Activated CD4-positive, alpha-beta T cell treated with anti-CD3 and anti-CD28 coated beads for 36 hours (primary cell): ENCODE measurements at regions of chr15 and their contacts with region 1.

Region 1: GRCh38 chr15:65610871-65611718 is at the start of gene INTS14:
- DNase-seq: peak; percentile 98
- ATAC-seq: peak; percentile 99
- H3K4me3 Mint-ChIP-seq: peak within 1 kb of the TSS; percentile 97
- H3K27ac Mint-ChIP-seq: peak within 1 kb of the TSS; percentile 96
- H3K4me1 Mint-ChIP-seq: peaks cover 33% of the 10 kb centered on the region
- H3K27me3 Mint-ChIP-seq: no peaks in the 10 kb centered on the region
- total RNA-seq, gene INTS14: 49.2 to 59.8 TPM

Region 2: DNA sequence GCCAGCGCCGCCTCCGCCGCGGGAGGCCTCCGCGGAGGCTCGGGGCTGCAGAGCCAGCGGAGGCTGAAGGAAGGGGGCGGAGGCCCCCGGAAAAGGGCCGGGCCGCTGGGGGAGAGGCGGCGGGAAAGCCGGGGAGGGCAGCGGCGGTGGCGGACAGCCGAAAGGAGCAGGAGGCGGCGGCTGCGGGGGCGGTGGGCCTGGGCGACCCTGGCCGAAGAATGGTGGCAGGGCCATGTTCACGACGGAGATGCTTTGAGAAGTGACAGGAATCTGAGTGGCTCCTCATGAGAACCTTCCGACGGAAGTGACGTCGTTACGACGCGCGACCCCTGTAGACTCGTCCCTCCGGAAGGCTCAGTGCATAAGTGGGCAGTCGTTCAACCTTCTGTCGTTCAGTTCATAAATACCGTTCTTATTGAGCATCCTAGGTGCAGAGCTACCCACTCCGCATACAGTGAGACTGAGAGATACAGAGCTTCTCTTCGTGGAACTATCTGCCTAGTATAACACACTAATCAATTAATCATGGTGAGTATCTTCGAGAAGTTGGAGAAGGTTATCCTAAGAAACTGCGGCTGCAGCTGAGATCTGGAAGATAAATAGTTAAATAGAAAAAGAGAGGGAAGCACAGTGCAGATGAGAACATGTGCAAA is 477.4 kb before region 1 on chr15 and contains the start of gene PDCD7:
- CTCF ChIA-PET with region 1: interaction called, 3 read pairs
- POLR2A ChIA-PET with region 1: no interaction called
- intact Hi-C with region 1: loop called in 1 of 2 experiments (anchors 1 kb)
- DNase-seq: peak; percentile 91
- ATAC-seq: peak; percentile 96
- H3K4me3 Mint-ChIP-seq: peak within 1 kb of the TSS; percentile 85
- H3K27ac Mint-ChIP-seq: peak within 1 kb of the TSS; percentile 93
- H3K4me1 Mint-ChIP-seq: peaks cover 26% of the 10 kb centered on the region
- H3K27me3 Mint-ChIP-seq: no peaks in the 10 kb centered on the region
- total RNA-seq, gene PDCD7: 16.6 to 24.8 TPM

Region 3: GRCh38 chr15:65426216-65426853 is 184.8 kb before region 1 on chr15:
- CTCF ChIA-PET with region 1: no interaction called
- POLR2A ChIA-PET with region 1: no interaction called
- intact Hi-C with region 1: no loop called
- DNase-seq: no peak
- ATAC-seq: no peak
- H3K4me3 Mint-ChIP-seq: no peak overlapping the region
- H3K27ac Mint-ChIP-seq: no peak overlapping the region
- H3K4me1 Mint-ChIP-seq: peaks cover 10% of the 10 kb centered on the region
- H3K27me3 Mint-ChIP-seq: peaks cover 38% of the 10 kb centered on the region

Region 4: DNA sequence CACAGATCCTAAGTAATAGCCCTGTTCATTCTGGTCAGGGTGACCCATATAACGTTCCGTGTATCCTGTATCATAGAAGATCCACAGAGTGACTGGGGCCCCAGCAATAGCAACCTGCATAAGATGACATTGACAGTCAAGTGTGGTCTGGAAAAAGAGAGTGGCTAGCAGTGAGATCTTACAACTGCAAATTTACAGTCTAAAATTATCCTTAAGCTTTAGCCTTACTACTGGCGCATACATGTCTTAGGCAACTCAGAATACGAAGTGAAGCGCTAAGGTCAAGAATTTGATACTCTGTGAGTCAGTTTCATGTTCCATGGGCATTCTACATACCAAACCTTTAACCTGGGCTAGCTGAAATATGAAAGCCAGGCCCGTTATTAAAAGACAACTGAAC is 159.1 kb before region 1 on chr15:
- CTCF ChIA-PET with region 1: no interaction called
- POLR2A ChIA-PET with region 1: no interaction called
- intact Hi-C with region 1: no loop called
- DNase-seq: no peak
- ATAC-seq: no peak
- H3K4me3 Mint-ChIP-seq: no peak overlapping the region
- H3K27ac Mint-ChIP-seq: no peak overlapping the region
- H3K4me1 Mint-ChIP-seq: no peaks in the 10 kb centered on the region
- H3K27me3 Mint-ChIP-seq: no peaks in the 10 kb centered on the region

Region 5: GRCh38 chr15:65516997-65517865 is 93.9 kb before region 1 on chr15 and contains the start of gene DPP8:
- CTCF ChIA-PET with region 1: no interaction called
- POLR2A ChIA-PET with region 1: interaction called, 3 read pairs
- intact Hi-C with region 1: loop called in 1 of 2 experiments (anchors 1 kb)
- DNase-seq: peak; percentile 97
- ATAC-seq: peak; percentile 97
- H3K4me3 Mint-ChIP-seq: peak within 1 kb of the TSS; percentile 91
- H3K27ac Mint-ChIP-seq: peak within 1 kb of the TSS; percentile 88
- H3K4me1 Mint-ChIP-seq: peaks cover 36% of the 10 kb centered on the region
- H3K27me3 Mint-ChIP-seq: no peaks in the 10 kb centered on the region
- total RNA-seq, gene DPP8: 25.8 to 26.4 TPM

Region 6: DNA sequence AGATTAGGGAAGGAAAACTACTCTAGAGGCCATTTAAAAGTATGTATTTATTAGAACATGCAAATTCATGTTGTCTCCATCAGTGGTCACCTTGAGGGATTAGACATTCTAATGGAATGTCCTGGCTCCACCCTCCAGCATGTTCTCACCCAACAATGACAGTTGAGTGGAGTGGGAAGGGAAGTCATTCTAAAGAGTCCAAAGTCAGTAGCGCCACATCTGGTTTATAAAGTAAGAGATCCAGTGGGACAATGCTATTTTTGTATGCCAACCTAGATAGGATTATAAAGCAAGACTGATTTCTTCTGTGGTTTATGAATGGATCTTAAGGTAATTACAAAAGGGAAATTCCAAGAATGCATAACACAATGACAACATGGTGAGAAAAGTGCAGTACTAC is 43.9 kb after region 1 on chr15:
- CTCF ChIA-PET with region 1: no interaction called
- POLR2A ChIA-PET with region 1: no interaction called
- intact Hi-C with region 1: no loop called
- DNase-seq: no peak
- ATAC-seq: no peak
- H3K4me3 Mint-ChIP-seq: no peak overlapping the region
- H3K27ac Mint-ChIP-seq: no peak overlapping the region
- H3K4me1 Mint-ChIP-seq: peaks cover 5% of the 10 kb centered on the region
- H3K27me3 Mint-ChIP-seq: no peaks in the 10 kb centered on the region

Region 7: DNA sequence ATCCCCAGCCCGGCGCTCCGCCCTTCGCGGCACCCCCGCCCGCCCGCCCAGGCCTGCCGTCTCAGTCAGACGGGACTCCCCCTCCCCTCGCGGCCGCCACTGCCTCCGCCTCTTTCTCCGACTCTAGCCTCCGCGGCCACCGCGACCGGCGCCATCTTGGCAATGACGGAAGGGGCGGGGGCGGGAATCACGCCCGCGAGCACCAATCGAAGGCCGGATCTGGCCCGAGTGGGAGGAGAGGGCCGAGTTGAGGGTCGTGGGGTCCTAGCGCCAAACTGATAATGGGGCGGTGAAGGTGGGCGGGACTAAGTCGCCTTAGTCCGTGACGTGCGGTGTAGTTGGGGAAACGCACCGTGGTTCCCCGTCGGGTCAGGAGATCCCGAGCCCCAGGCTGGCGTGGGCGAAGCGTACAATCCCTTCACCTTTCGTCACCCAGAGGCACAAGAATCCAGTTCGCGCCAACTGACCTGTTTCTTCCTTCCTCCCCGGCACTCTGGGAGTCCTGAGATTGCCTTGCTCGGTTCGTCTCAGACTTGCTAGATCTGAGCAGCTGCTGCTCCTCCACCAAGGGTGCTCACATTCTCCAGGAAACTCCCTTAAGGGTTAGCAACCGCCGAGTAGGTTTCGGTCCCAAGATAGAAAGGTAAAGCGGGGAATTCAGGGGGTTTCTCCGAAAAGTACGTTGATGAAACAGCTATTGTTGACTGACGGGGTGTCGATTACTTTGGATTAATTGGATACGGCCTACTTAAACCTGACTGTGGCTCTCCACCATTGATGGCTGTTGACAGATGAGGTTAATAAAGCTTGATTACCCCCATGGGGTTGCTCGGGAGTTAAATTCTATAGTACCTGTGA is 181.3 kb after region 1 on chr15 and contains the start of gene DENND4A:
- CTCF ChIA-PET with region 1: no interaction called
- POLR2A ChIA-PET with region 1: no interaction called
- intact Hi-C with region 1: loop called in 1 of 2 experiments (anchors 1 kb)
- DNase-seq: peak; percentile 99
- ATAC-seq: peak; percentile 80
- H3K4me3 Mint-ChIP-seq: peak within 1 kb of the TSS; percentile 80
- H3K27ac Mint-ChIP-seq: peak within 1 kb of the TSS; percentile 98
- H3K4me1 Mint-ChIP-seq: peaks cover 60% of the 10 kb centered on the region
- H3K27me3 Mint-ChIP-seq: no peaks in the 10 kb centered on the region
- total RNA-seq, gene DENND4A: 35.6 to 43.5 TPM

Region 8: GRCh38 chr15:65856821-65857455 is 245.8 kb after region 1 on chr15:
- CTCF ChIA-PET with region 1: interaction called, 3 read pairs
- POLR2A ChIA-PET with region 1: no interaction called
- intact Hi-C with region 1: loop called in 1 of 2 experiments (anchors 1 kb)
- DNase-seq: peak; percentile 90
- ATAC-seq: peak; percentile 72
- H3K4me3 Mint-ChIP-seq: no peak overlapping the region
- H3K27ac Mint-ChIP-seq: no peak overlapping the region
- H3K4me1 Mint-ChIP-seq: peaks cover 14% of the 10 kb centered on the region
- H3K27me3 Mint-ChIP-seq: no peaks in the 10 kb centered on the region

Region 9: DNA sequence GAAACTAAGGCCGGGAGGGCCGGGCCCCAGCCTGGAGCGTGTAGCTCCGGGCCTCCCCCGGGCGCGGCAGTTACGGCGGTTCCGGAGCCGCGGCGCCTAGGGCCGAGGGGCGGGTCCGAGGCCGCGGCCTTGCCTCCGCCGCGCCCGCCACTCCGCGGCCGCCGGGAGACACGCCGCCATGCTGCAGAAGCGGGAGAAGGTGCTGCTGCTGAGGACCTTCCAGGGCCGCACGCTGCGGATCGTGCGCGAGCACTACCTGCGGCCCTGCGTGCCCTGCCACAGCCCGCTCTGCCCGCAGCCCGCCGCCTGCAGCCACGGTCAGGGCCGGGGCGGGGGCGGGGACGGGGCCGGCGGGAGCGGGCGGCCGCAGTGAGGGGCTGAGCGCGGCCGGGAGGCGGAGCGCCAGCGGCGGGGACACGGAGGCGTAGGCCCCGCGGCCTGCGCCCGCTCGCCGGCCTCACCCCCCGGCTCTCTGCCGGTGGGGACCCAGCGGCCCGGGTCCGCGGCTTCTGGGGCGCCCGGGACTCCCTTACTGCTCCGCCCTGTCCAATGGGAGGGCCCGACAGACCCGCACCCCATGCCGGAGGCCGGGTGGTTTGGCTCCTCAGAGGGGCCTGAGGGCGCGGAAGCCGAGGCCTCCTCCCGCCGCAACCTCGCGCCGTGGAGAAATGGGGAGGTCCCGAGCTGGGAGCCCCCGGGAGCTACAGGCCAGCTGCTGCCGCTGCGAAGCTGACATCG is 682.5 kb after region 1 on chr15 and contains the start of gene DIS3L:
- CTCF ChIA-PET with region 1: no interaction called
- POLR2A ChIA-PET with region 1: no interaction called
- intact Hi-C with region 1: loop called (anchors 2 to 10 kb)
- DNase-seq: peak; percentile 75
- ATAC-seq: peak; percentile 80
- H3K4me3 Mint-ChIP-seq: peak within 1 kb of the TSS; percentile 86
- H3K27ac Mint-ChIP-seq: peak within 1 kb of the TSS; percentile 90
- H3K4me1 Mint-ChIP-seq: peaks cover 49% of the 10 kb centered on the region
- H3K27me3 Mint-ChIP-seq: no peaks in the 10 kb centered on the region
- total RNA-seq, gene DIS3L: 24.6 to 25.9 TPM

Region 10: DNA sequence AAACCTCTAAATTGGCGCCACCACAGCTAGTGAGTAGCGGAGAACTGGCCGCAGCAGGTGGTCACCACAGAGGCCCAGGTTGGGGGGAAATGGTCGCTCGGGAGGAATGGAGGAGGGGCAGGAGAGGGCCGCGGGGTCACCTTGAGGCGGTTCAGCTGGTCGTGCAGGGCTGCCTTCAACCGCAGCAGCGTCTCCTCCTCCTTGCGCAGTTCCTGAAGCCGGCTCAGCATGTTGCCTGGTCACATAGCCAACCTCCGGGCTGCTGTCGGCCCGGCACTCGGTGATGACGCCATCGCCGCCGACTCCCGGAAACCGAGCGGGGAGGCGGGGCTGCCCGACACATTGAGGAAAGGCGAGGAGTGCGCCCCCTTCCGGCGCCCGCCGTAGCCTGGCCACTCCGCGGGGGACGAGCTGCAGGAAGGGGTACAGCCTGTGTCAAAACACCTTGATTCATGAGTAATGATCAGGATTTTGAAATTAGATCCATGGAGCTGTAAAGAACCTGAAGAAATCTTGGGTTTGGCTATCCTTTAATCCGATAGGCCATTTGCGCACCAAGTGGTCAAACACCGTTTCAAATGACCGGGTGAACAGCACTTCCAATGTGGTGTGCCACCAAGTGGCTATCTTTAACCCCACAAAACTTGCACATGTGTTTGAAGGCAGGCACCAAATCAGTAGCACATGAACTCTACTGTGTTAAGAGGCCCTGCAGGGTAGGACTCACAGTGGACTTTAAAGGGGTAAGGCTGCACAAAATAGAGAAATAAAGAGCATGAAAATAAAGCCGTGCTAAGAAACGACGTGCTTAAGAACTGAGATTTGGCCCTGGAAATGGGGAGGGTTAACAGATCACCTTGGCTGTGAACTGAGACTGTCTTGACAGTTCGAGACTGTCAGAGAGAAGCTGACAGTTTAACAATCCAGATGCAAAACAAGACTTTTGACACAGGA is 886.7 kb after region 1 on chr15 and contains the start of gene SNAPC5:
- CTCF ChIA-PET with region 1: no interaction called
- POLR2A ChIA-PET with region 1: no interaction called
- intact Hi-C with region 1: loop called in 1 of 2 experiments (anchors 2 kb)
- DNase-seq: peak; percentile 99
- ATAC-seq: peak; percentile 90
- H3K4me3 Mint-ChIP-seq: peak within 1 kb of the TSS; percentile 85
- H3K27ac Mint-ChIP-seq: peak within 1 kb of the TSS; percentile 93
- H3K4me1 Mint-ChIP-seq: peaks cover 56% of the 10 kb centered on the region
- H3K27me3 Mint-ChIP-seq: no peaks in the 10 kb centered on the region
- total RNA-seq, gene SNAPC5: 25.7 to 30.1 TPM